Right ventricle myocardium superior (tissue), 1 donor: ENCODE measurements at regions of chr20 and their contacts with region 1.

Region 1: DNA sequence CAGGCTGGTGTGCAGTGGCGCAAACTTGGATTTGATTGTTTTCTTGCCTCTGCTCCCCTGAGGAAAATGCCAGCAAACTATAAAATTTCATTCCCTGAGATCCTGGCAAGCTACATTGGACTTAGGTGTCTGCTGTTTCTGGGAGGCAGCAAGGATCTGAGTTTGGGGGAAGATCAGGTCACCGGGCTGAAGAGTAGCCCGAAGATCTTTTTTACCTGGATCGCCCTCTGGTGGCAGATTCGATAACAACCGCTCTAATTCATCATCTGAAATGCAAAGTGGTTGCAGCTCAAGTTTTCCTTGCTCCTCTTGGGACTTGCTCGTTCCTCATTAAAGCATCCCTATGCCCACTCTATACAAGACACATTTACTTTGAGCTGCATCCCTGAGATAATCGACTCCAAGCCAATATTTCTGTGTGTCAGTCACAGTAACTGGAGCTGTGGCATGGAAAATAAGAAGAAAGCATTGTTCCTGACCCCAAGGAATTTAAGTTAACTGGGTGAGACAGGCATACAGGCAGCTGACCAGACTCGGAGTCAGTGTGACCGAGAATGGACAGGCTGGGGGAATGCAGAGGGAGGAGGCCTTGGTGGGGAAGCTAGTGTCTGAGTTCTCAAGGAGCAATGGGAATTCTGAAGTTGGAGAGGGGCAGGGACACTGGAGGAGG is 131.8 kb upstream of the PROKR2 start:
- DNase-seq: no peak
- ATAC-seq: peak; percentile 51

Region 2: GRCh38 chr20:3753098-3753980 is 1695.2 kb before region 1 on chr20:
- intact Hi-C with region 1: no loop called
- DNase-seq: no peak
- ATAC-seq: peak; percentile 72

Region 3: GRCh38 chr20:5214826-5215225 is 233.8 kb before region 1 on chr20:
- intact Hi-C with region 1: loop called (anchors 5 kb)
- DNase-seq: no peak
- ATAC-seq: peak; percentile 25

Region 4: DNA sequence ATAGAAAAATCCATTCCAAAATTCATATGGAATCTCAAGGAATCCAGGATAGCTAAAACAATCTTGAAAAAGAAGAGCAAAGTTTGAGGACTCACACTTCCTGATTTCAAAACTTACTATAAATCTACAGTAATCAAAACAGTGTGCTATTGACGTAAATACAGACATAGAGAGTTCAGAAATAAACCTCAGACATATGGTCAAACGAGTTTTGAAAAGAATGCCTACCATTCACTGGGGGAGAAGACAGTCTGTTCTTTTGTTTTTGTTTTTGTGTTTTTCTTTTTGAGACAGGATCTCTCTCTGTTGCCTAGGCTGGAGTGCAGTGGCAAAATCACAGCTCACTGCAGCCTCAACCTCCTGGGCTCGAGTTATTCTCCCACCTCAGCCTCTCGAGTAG is 106.6 kb before region 1 on chr20:
- intact Hi-C with region 1: no loop called
- DNase-seq: no peak
- ATAC-seq: no peak

Region 5: DNA sequence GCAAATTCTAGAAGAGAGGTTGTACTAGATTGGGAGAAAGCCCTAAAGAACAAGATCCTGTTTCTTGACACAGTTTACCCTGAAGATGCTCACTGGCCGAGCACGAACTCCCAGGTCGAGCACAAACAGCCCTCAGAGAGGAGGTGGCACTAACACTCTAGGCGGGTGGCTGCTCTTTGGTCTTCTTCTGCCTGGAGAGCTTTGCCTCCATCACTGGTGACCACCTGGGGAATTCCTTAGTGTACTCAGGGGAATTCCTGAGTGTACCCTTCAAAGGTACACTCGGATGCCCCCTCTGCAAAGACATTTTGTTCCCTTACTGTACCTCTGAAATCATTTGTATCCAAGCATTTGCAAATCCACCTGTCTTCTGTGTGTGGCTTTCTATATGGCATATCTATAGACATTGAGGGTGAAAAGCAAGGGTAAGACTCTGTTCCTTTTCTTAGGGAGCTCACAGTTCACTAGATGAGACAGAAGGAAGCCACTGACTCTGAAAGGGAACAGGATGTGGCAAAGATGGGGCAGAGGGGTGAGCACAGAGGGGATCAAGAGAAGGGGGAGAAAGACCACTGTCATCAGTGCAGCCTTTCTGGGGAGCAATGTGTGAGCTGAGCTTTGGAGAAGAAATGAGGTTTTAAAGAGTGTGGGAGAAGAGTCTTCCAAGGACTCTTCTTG is 37.9 kb after region 1 on chr20:
- intact Hi-C with region 1: no loop called
- DNase-seq: no peak
- ATAC-seq: no peak

Region 6: DNA sequence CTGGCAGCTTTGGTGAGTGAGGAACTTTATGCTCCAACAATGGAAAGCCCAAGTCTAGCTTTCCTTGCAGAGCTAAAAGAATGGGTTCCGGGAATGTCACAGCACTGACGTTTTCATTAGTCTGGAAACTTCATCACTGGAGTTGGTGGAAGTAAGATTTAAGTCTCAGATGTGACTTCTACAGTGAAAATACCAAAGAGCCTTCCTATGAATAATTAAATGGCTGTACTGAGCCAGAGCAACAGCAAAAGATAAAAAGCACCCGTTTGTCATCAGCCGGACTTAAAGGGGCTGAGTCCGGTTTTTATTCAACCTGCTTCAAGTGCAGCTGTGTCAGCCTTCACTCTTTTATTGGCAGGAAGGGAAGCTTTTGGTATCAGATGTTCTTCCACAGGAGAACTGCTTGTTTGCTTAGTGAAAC is 255.1 kb after region 1 on chr20:
- intact Hi-C with region 1: no loop called
- DNase-seq: no peak
- ATAC-seq: peak; percentile 18